Activated naive CD4-positive, alpha-beta T cell treated with anti-CD3 and anti-CD28 coated beads for 36 hours (primary cell): ENCODE measurements at regions of chr14 and their contacts with region 1.

Region 1: GRCh38 chr14:77067632-77068514 is 30.2 kb upstream of the CIPC start:
- DNase-seq: peak; percentile 71
- H3K4me3 Mint-ChIP-seq: no peak overlapping the region
- H3K27ac Mint-ChIP-seq: no peak overlapping the region
- H3K4me1 Mint-ChIP-seq: no peaks in the 10 kb centered on the region
- H3K27me3 Mint-ChIP-seq: peaks cover 2% of the 10 kb centered on the region

Region 2: GRCh38 chr14:76867516-76868453 is 200.1 kb before region 1 on chr14:
- CTCF ChIA-PET with region 1: interaction called, 692 read pairs
- intact Hi-C with region 1: no loop called
- DNase-seq: peak; percentile 68
- H3K4me3 Mint-ChIP-seq: no peak overlapping the region
- H3K27ac Mint-ChIP-seq: no peak overlapping the region
- H3K4me1 Mint-ChIP-seq: peaks cover 31% of the 10 kb centered on the region
- H3K27me3 Mint-ChIP-seq: no peaks in the 10 kb centered on the region

Region 3: GRCh38 chr14:76894308-76894892 is 173.5 kb before region 1 on chr14:
- CTCF ChIA-PET with region 1: interaction called, 692 read pairs
- intact Hi-C with region 1: no loop called
- DNase-seq: no peak
- H3K4me3 Mint-ChIP-seq: no peak overlapping the region
- H3K27ac Mint-ChIP-seq: no peak overlapping the region
- H3K4me1 Mint-ChIP-seq: no peaks in the 10 kb centered on the region
- H3K27me3 Mint-ChIP-seq: no peaks in the 10 kb centered on the region

Region 4: GRCh38 chr14:76947078-76947837 is 120.6 kb before region 1 on chr14:
- CTCF ChIA-PET with region 1: interaction called, 6 read pairs
- intact Hi-C with region 1: loop called (anchors 1 kb)
- DNase-seq: peak; percentile 93
- H3K4me3 Mint-ChIP-seq: no peak overlapping the region
- H3K27ac Mint-ChIP-seq: peak overlapping the region; percentile 39
- H3K4me1 Mint-ChIP-seq: peaks cover 33% of the 10 kb centered on the region
- H3K27me3 Mint-ChIP-seq: no peaks in the 10 kb centered on the region

Region 5: GRCh38 chr14:77124345-77125280 is 56.7 kb after region 1 on chr14:
- CTCF ChIA-PET with region 1: interaction called, 16 read pairs
- intact Hi-C with region 1: loop called (anchors 1 kb)
- DNase-seq: peak; percentile 69
- H3K4me3 Mint-ChIP-seq: peak overlapping the region; percentile 77
- H3K27ac Mint-ChIP-seq: peak overlapping the region; percentile 42
- H3K4me1 Mint-ChIP-seq: peaks cover 36% of the 10 kb centered on the region
- H3K27me3 Mint-ChIP-seq: peaks cover 16% of the 10 kb centered on the region